ENCODE measurements at regions of chr18 and their contacts with region 1.

Region 1: DNA sequence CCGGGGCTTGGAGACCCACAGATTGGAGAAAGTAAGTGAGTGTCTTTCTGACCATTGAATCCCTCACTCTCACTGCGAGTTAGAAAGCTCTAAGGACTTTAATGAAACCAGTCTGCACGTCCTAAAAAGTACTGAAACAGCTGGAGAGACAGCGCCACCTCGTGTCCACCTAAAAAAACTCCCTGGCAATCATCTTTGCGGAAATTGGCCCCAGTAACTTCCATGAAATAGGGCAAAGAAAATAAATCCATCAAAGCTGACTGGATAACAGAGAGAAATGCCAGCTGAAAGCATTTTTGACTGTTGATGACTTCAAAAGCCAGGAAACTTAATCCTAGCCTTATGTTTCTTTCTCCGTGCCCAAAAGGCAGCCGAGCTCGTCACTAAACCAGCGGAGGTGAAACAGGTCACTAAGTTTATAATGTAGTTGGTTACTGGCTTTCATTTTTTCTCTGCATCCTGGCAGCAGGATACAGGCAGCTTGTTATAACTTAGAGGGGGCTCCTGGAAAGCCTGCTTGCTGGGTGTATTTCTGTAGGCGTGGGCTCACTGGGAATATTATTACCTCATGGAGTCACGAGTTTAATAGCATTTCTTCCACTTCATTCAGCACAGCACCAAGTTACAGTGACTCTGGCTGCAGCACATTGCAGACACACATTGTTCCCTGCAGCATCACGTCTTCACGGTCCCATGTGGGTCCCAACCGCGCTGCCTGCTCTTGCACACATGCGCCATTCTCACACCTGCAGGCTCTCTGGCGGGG is 266.5 kb downstream of the HRH4 start:
- DNase-seq: peak; percentile 50 to 79 (median 64)
- H3K4me3 ChIP-seq: no peak overlapping the region
- H3K27ac ChIP-seq: no peak overlapping the region
- H3K4me1 ChIP-seq: peaks cover 0 to 3% of the 10 kb centered on the region in 2 donors
- H3K27me3 ChIP-seq: peaks cover 22% of the 10 kb centered on the region
- CTCF ChIP-seq: peak; percentile 72 to 87 (median 79)
- POLR2A ChIP-seq: no peak

Region 2: DNA sequence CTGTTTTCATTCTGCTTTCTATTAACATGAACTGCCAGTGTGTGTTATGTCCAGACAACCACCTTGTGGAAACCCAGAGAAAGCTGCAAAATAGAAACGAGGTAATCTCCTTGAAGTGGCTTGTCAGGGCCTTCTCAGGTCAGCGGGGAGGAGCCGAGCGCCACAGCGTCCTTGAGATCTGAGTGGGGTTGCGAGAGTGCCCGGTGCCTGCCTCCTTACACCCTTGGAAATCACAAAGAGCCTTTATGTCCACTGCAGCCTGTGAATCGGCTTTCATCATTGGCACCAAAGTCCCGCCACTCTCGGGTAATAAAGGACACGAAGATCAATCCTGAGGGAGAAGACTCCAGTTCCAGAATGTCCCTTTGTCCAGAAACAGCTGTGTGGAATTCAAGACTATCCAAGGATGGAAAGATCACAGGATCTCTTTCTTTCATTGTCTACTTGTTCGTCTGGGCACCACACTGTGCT is 131.3 kb before region 1 on chr18:
- intact Hi-C with region 1: loop called in 1 of 2 experiments (anchors 10 kb)
- DNase-seq: peak in 1 of 7 donors; percentile 5
- H3K4me3 ChIP-seq: no peak overlapping the region
- H3K27ac ChIP-seq: no peak overlapping the region
- H3K4me1 ChIP-seq: no peaks in the 10 kb centered on the region
- H3K27me3 ChIP-seq: no peaks in the 10 kb centered on the region
- CTCF ChIP-seq: no peak
- POLR2A ChIP-seq: no peak

Region 3: GRCh38 chr18:24602201-24602600 is 124.7 kb before region 1 on chr18:
- intact Hi-C with region 1: loop called (anchors 2 to 10 kb)
- DNase-seq: no peak
- H3K4me3 ChIP-seq: no peak overlapping the region
- H3K27ac ChIP-seq: no peak overlapping the region
- H3K4me1 ChIP-seq: no peaks in the 10 kb centered on the region
- H3K27me3 ChIP-seq: no peaks in the 10 kb centered on the region
- CTCF ChIP-seq: no peak
- POLR2A ChIP-seq: no peak